Sciatic nerve (tissue), 2 donors: ENCODE measurements at regions of chr12 and their contacts with region 1.

Region 1: DNA sequence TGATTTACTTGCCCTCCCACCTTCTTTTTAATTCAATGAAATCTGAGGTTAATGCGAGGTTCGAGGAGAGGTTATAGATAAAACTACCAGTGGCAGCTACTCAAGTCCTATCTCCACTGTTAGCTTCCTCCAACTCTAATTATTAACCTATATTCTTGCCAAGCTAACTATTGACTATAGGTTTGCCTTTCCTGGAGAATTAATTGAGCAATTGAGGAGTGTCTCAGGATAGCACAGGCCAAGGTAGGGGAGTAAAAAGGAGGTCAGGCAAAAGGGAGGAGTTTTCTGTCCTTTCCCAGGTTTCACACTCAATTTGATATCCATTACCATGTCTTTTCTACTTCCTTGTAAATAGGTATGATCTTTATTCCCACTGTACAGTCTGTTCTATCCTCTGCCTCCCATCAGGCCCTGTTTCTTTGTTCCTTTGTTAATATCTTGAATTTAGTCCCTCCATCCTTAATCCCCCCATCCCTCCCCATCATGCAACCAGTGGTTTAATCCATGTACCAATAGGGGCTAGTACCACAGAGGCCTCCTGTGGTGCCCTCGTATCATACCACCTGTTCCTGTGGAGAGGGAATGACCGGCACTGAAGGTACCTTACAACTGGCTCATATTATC is 3.7 kb upstream of the SUOX start:
- DNase-seq: no peak
- ATAC-seq: no peak

Region 2: GRCh38 chr12:55392032-55392795 is 601.1 kb before region 1 on chr12:
- intact Hi-C with region 1: no loop called
- DNase-seq: no peak
- ATAC-seq: no peak

Region 3: GRCh38 chr12:56029666-56030293 is 36.4 kb after region 1 on chr12:
- intact Hi-C with region 1: loop called (anchors 5 kb)
- DNase-seq: no peak
- ATAC-seq: peak; percentile 76

Region 4: DNA sequence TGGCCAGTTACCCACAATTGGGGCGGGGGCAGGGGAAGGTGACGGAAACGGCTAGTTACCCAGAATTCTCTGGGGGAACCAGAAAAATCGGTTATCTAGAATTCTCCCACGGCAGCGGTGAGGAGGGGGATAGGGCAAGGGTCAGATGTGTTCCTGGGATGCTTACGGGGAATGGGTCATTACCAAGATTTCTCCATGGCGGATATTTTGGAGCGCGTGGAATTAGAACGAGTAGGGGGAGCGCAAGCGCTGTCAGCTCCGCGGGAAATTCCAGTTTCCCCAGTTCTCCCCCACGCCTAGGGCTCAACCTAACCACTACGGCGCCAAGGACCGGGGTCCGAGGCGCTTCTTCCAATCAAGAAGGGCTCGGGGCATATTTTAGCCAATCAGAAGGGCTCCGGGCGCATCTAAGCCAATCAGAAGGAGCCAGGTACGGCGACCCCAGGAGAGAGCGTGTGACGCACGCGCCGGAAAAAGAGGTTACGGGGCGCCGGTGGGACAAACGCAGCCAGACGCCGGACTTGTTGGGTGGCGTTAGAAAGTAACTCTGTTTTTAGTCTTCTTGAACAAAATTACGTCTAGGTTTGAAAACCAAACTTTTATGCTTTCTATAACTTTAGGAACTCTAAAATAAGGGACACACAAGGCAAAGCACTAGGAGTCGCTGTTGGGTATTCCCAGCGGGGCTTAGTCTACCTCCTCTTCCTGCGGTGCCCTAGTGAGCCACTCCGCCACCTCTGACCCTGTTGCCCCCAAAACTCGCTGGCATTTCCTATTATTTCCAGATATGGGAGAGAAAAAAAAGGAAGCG is 340.5 kb after region 1 on chr12 and contains the start of gene PAN2:
- intact Hi-C with region 1: no loop called
- DNase-seq: peak; percentile 96
- ATAC-seq: peak; percentile 99
- total RNA-seq, gene PAN2: 101 TPM